KBM-7 (cell line): ENCODE measurements at regions of chr7 and their contacts with region 1.

Region 1: GRCh38 chr7:23597094-23598091 is at the start of gene CCDC126:
- DNase-seq: peak; percentile 94

Region 2: DNA sequence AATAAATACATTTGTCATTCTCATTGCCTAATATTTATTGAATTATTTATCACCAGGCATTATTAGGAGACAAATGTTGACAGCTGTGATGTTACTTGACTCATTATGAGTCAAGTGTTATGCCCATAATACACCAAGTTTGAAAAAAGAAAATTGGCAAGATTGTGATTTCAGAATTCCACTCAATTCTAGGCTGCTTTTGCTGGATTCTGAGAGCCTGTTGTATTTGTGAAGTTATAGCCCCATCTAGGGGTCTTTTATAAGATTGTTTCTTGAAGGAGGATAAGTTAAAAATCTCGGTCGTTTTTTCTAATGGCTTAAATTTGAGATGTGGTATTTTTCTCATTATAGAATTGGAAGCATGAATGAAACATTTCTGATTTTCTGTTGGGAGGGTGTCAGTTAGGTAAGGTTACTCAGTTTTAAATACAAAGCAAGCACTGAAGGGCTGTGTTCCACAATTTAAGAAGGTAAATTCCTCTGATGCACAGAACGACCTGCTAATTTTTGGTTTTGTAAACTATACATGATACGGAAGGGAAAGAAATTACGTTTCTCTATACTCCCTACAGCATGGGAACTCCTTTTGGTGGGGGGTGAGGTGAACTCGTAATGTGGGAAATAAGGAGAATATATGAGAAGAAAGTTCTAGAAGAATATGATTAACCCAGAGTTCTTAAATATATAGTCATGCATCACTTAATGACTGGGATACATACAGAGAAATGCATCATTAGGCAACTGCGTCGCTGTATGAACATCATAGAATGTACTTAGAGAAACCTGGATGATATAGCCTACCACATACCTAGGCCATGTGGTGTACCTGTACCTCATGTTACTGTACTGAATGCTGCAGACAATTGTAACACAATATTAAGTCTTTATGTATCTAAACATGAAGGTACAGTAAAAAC is 115.2 kb after region 1 on chr7:
- in situ Hi-C with region 1: loop called (anchors 25 kb)
- DNase-seq: peak; percentile 45